Heart left ventricle (tissue), 16 donors: ENCODE measurements at regions of chr16 and their contacts with region 1.

Region 1: DNA sequence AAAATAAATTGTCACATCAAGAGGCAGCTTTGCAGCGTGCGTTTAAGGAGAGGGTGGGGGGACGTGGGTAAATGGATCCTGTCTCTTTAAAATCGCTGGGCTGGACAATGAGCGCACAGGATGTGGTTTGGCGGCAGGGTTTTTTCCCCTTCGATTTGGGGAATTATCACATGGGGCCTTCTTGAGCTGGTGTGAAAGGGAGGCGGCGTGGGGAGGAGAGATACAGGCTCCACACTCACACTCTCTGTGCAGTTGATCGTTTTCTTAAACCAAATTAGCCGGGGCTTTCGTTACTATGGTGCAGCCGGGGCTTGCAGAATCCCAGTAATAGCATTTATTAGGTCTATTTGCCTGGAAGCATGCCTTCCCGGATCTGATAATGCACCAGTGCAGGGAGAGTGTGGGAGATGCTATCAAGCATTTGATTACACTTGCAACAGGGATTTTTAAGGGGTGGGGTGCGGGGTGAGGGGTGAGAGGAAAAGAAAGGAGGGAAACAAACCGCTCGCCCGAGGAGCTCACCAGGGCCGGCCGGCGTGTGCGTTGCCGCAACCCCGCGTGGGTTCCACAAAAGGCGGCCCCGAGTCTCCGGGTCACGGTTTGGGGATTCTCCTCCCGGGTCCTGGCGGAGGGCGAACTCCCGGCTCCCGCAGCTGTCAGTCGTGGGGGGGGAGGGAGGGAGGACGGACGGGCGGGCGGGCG is 58.9 kb upstream of the GSE1 start:
- DNase-seq: peak in 4 of 5 donors; percentile 73 to 83 (median 80)
- ATAC-seq: peak; percentile 40 to 64 (median 54)
- H3K4me3 ChIP-seq: peak overlapping the region; percentile 63 to 96 (median 79)
- H3K27ac ChIP-seq: peak overlapping the region; percentile 47 to 99 (median 90)
- H3K4me1 ChIP-seq: peaks cover 0 to 66% (median 31%) of the 10 kb centered on the region in 12 donors
- H3K27me3 ChIP-seq: no peaks in the 10 kb centered on the region
- CTCF ChIP-seq: no peak
- POLR2A ChIP-seq: no peak

Region 2: GRCh38 chr16:85524630-85525419 is 29.4 kb before region 1 on chr16:
- intact Hi-C with region 1: loop called in 1 of 10 experiments (anchors 5 kb)
- DNase-seq: peak in 4 of 5 donors; percentile 52 to 86 (median 62)
- ATAC-seq: peak in 1 of 4 donors; percentile 6
- H3K4me3 ChIP-seq: no peak overlapping the region
- H3K27ac ChIP-seq: no peak overlapping the region
- H3K4me1 ChIP-seq: peaks cover 6 to 51% (median 28%) of the 10 kb centered on the region in 12 donors
- H3K27me3 ChIP-seq: no peaks in the 10 kb centered on the region
- CTCF ChIP-seq: no peak
- POLR2A ChIP-seq: no peak

Region 3: DNA sequence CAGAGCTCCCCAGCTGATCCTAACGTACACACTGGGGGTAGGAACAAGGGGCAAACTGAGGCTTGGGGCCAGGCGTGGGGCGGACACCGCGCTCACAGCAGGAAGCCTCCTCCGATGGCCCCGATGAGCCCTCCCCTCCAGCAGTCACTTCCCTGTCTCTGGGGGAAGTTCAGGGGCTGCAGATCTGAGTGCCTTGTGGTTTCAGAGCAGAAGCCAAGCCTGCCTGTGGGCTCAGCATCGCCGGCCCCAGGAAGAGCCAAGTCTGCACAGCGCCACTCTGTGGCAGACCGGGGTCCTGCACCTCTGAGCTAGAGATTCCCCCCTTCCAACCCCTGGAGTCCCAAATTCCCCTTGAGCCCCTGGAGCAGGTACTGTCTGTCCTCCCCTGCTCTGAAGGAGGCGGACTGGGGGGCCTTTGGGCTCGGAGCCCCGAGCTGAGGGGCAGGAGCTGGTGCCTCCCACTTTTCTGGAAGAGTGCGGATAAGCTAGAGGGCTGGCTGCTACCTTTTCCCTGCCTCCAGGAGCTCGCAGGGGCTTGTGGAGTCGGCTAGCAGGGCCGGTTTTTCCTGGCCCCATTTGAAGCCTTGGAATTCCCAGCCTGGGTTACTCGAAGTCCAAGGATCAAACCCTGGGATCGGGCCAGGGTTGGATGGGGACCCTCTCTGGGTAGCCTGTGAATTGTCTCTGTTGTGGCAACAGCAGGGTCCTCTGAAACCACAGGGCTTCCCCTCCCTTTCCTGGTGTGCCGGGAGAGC is 61.8 kb after region 1 on chr16:
- intact Hi-C with region 1: loop called in 7 of 10 experiments (anchors 2 kb)
- DNase-seq: peak; percentile 74 to 89 (median 77)
- ATAC-seq: peak; percentile 7 to 36 (median 16)
- H3K4me3 ChIP-seq: peak overlapping the region in 7 of 12 donors; percentile 20 to 82 (median 71)
- H3K27ac ChIP-seq: peak overlapping the region in 11 of 12 donors; percentile 50 to 98 (median 94)
- H3K4me1 ChIP-seq: peaks cover 9 to 77% (median 51%) of the 10 kb centered on the region in 12 donors
- H3K27me3 ChIP-seq: no peaks in the 10 kb centered on the region
- CTCF ChIP-seq: peak; percentile 68 to 91 (median 81)
- POLR2A ChIP-seq: no peak